ENCODE measurements at regions of chr17 and their contacts with region 1.

Region 1: GRCh38 chr17:38824899-38825761 is at the start of gene CWC25:
- DNase-seq: peak; percentile 91 to 100 (median 97)
- ATAC-seq: peak; percentile 92
- H3K4me3 ChIP-seq: peak within 1 kb of the TSS; percentile 77
- H3K4me3 Mint-ChIP-seq: peak within 1 kb of the TSS; percentile 92 to 100 (median 99)
- H3K27ac ChIP-seq: peak within 1 kb of the TSS; percentile 92
- H3K27ac Mint-ChIP-seq: peak within 1 kb of the TSS; percentile 97 to 100 (median 100)
- H3K4me1 ChIP-seq: peaks cover 18 to 21% of the 10 kb centered on the region in 2 donors
- H3K4me1 Mint-ChIP-seq: peaks cover 13 to 42% (median 34%) of the 10 kb centered on the region in 7 donors
- H3K27me3 ChIP-seq: no peaks in the 10 kb centered on the region
- H3K27me3 Mint-ChIP-seq: peaks cover 0 to 5% (median 0%) of the 10 kb centered on the region in 5 donors
- total RNA-seq, gene CWC25: 33.0 to 69.5 (median 53.4) TPM

Region 2: GRCh38 chr17:38444151-38444550 is 381.0 kb before region 1 on chr17:
- CTCF ChIA-PET with region 1: no interaction called
- POLR2A ChIA-PET with region 1: no interaction called
- intact Hi-C with region 1: no loop called
- DNase-seq: peak in 8 of 9 donors; percentile 21 to 60 (median 53)
- ATAC-seq: peak; percentile 77
- H3K4me3 ChIP-seq: no peak overlapping the region
- H3K4me3 Mint-ChIP-seq: peak overlapping the region in 5 of 10 donors; percentile 18 to 61 (median 48)
- H3K27ac ChIP-seq: no peak overlapping the region
- H3K27ac Mint-ChIP-seq: peak overlapping the region in 1 of 9 donors; percentile 10
- H3K4me1 ChIP-seq: peaks cover 0 to 8% of the 10 kb centered on the region in 2 donors
- H3K4me1 Mint-ChIP-seq: peaks cover 0 to 15% (median 11%) of the 10 kb centered on the region in 7 donors
- H3K27me3 ChIP-seq: no peaks in the 10 kb centered on the region
- H3K27me3 Mint-ChIP-seq: peaks cover 0 to 9% (median 2%) of the 10 kb centered on the region in 5 donors

Region 3: GRCh38 chr17:38628441-38628840 is 196.7 kb before region 1 on chr17:
- CTCF ChIA-PET with region 1: no interaction called
- POLR2A ChIA-PET with region 1: no interaction called
- intact Hi-C with region 1: no loop called
- DNase-seq: no peak
- ATAC-seq: no peak
- H3K4me3 ChIP-seq: no peak overlapping the region
- H3K4me3 Mint-ChIP-seq: no peak overlapping the region
- H3K27ac ChIP-seq: no peak overlapping the region
- H3K27ac Mint-ChIP-seq: no peak overlapping the region
- H3K4me1 ChIP-seq: no peaks in the 10 kb centered on the region
- H3K4me1 Mint-ChIP-seq: peaks cover 0 to 4% (median 0%) of the 10 kb centered on the region in 7 donors
- H3K27me3 ChIP-seq: no peaks in the 10 kb centered on the region
- H3K27me3 Mint-ChIP-seq: peaks cover 0 to 20% (median 7%) of the 10 kb centered on the region in 5 donors

Region 4: GRCh38 chr17:38799378-38800236 is 25.5 kb before region 1 on chr17 and contains the start of gene PIP4K2B:
- CTCF ChIA-PET with region 1: no interaction called
- POLR2A ChIA-PET with region 1: interaction called, 3 read pairs
- intact Hi-C with region 1: loop called (anchors 1 kb)
- DNase-seq: peak; percentile 70 to 88 (median 78)
- ATAC-seq: peak; percentile 87
- H3K4me3 ChIP-seq: peak within 1 kb of the TSS; percentile 93
- H3K4me3 Mint-ChIP-seq: peak within 1 kb of the TSS; percentile 92 to 100 (median 96)
- H3K27ac ChIP-seq: peak within 1 kb of the TSS; percentile 81
- H3K27ac Mint-ChIP-seq: peak within 1 kb of the TSS; percentile 88 to 96 (median 92)
- H3K4me1 ChIP-seq: peaks cover 15 to 21% of the 10 kb centered on the region in 2 donors
- H3K4me1 Mint-ChIP-seq: peaks cover 31 to 48% (median 42%) of the 10 kb centered on the region in 7 donors
- H3K27me3 ChIP-seq: no peaks in the 10 kb centered on the region
- H3K27me3 Mint-ChIP-seq: no peaks in the 10 kb centered on the region
- total RNA-seq, gene PIP4K2B: 32.4 to 67.9 (median 49.1) TPM

Region 5: DNA sequence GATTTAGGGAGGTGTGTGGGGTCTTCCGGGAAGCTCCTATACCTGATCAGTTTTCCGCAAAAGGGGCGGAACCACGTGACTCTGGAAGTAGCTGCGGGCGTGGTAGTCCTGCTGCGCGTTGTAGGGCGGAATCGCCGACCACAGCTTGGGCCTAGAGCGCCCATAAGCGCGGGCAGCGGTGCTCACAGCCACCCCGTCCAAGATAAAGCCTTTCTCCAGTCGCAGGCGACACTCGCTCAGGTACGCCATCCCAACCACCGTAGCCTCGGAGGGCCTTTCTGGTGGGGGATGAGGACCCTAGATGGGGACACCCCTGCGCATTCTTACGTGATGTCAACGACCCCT is 16.0 kb after region 1 on chr17:
- CTCF ChIA-PET with region 1: no interaction called
- POLR2A ChIA-PET with region 1: interaction called, 10 read pairs
- intact Hi-C with region 1: no loop called
- DNase-seq: no peak
- ATAC-seq: peak; percentile 53
- H3K4me3 ChIP-seq: peak overlapping the region; percentile 20
- H3K4me3 Mint-ChIP-seq: peak overlapping the region in 7 of 10 donors; percentile 32 to 75 (median 65)
- H3K27ac ChIP-seq: peak overlapping the region; percentile 15
- H3K27ac Mint-ChIP-seq: peak overlapping the region in 2 of 9 donors; percentile 17 to 52
- H3K4me1 ChIP-seq: no peaks in the 10 kb centered on the region
- H3K4me1 Mint-ChIP-seq: no peaks in the 10 kb centered on the region
- H3K27me3 ChIP-seq: no peaks in the 10 kb centered on the region
- H3K27me3 Mint-ChIP-seq: no peaks in the 10 kb centered on the region

Region 6: DNA sequence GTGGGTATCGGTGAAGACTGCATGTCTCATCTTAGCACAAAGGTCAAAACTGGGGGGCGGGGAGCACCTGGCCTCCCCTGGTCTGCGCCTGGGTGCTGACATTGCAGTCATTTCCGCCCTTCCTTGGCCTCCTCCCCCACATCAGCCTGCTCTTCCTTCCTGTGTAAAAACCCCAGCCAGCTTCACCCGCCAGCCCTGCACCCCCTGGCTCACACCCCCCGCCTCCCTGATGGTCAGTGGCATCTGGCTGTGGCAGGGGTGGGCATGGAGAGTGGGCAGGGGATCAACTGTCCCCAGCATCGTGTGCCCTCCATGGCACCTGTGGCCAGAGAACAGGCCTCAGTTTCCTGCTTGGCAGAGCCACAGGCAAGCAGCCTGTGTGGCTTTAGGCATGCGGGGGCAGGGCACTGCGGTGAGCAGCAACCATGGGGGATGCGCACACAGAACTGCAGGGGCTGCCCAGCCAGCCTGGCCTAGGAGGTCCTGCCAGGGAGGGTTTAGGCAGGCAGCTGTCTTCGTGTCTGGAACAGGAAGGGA is 73.8 kb after region 1 on chr17:
- CTCF ChIA-PET with region 1: interaction called, 3 read pairs
- POLR2A ChIA-PET with region 1: interaction called, 4 read pairs
- intact Hi-C with region 1: loop called (anchors 1 to 2 kb)
- DNase-seq: peak; percentile 48 to 84 (median 73)
- ATAC-seq: peak; percentile 89
- H3K4me3 ChIP-seq: peak overlapping the region; percentile 46
- H3K4me3 Mint-ChIP-seq: peak overlapping the region; percentile 77 to 93 (median 83)
- H3K27ac ChIP-seq: peak overlapping the region; percentile 81
- H3K27ac Mint-ChIP-seq: peak overlapping the region; percentile 86 to 100 (median 98)
- H3K4me1 ChIP-seq: peaks cover 60 to 85% of the 10 kb centered on the region in 2 donors
- H3K4me1 Mint-ChIP-seq: peaks cover 30 to 71% (median 65%) of the 10 kb centered on the region in 7 donors
- H3K27me3 ChIP-seq: no peaks in the 10 kb centered on the region
- H3K27me3 Mint-ChIP-seq: no peaks in the 10 kb centered on the region

Region 7: GRCh38 chr17:38967290-38967738 is 142.2 kb after region 1 on chr17 and contains the start of gene FBXO47:
- CTCF ChIA-PET with region 1: no interaction called
- POLR2A ChIA-PET with region 1: no interaction called
- intact Hi-C with region 1: loop called in 1 of 2 experiments (anchors 1 kb)
- DNase-seq: peak; percentile 38 to 86 (median 77)
- ATAC-seq: peak; percentile 99
- H3K4me3 ChIP-seq: peak within 1 kb of the TSS; percentile 43
- H3K4me3 Mint-ChIP-seq: peak within 1 kb of the TSS; percentile 55 to 84 (median 81)
- H3K27ac ChIP-seq: peak within 1 kb of the TSS; percentile 59
- H3K27ac Mint-ChIP-seq: peak within 1 kb of the TSS; percentile 31 to 96 (median 69)
- H3K4me1 ChIP-seq: peaks cover 0 to 16% of the 10 kb centered on the region in 2 donors
- H3K4me1 Mint-ChIP-seq: peaks cover 11 to 28% (median 15%) of the 10 kb centered on the region in 7 donors
- H3K27me3 ChIP-seq: no peaks in the 10 kb centered on the region
- H3K27me3 Mint-ChIP-seq: peaks cover 0 to 2% (median 0%) of the 10 kb centered on the region in 5 donors
- total RNA-seq, gene FBXO47: not detected